Heart left ventricle (tissue), 16 donors: ENCODE measurements at regions of chr5 and their contacts with region 1.

Region 1: DNA sequence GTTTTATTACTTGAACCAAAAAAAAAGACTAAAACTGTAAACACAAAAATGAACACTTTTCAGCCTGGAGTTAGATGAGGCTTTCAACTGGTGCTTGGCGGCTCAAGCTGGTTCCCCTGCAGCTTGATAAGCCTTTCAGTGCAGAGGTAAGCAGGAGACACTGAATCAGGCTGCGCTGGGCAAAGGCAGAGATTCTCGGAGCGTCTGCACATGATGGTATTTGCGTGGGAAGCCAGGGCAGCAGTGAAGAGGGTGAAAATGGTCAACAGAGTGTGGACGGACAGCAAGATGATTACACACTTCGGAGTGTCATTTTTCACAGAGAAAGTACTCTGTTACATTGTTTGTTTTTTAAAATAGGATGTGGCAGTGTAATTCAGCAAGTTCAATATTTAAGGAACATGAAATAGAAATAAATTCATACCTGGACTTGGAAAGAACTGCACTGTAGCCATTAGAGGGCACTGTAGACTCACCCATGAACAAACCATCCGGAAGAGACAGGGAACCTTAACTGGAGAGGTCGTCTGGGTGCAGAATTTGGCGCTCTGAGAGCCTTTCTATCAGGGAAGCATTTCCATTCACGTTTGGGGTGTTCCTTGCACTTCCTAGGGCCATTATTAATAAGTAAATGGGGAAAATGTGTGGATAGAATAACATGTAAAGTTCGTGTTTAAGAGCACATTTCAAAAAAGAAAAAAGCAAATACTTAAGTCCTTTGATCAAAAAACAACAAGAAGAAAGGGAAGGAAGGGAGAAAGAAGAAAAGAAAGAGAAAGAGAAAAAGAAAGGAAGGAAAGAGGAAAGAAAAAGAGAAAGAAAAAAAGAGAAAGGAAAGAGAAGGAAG is 69.8 kb downstream of the ICE1 start:
- DNase-seq: no peak
- ATAC-seq: peak in 3 of 4 donors; percentile 49 to 62 (median 57)
- H3K4me3 ChIP-seq: no peak overlapping the region
- H3K27ac ChIP-seq: no peak overlapping the region
- H3K4me1 ChIP-seq: peaks cover 0 to 31% (median 8%) of the 10 kb centered on the region in 12 donors
- H3K27me3 ChIP-seq: peaks cover 0 to 7% (median 0%) of the 10 kb centered on the region in 9 donors
- CTCF ChIP-seq: peak; percentile 55 to 78 (median 62)
- POLR2A ChIP-seq: no peak

Region 2: GRCh38 chr5:5795074-5795771 is 302.9 kb after region 1 on chr5:
- intact Hi-C with region 1: loop called in 3 of 10 experiments (anchors 5 to 10 kb)
- DNase-seq: peak; percentile 55 to 92 (median 67)
- ATAC-seq: peak; percentile 89 to 98 (median 96)
- H3K4me3 ChIP-seq: no peak overlapping the region
- H3K27ac ChIP-seq: peak overlapping the region in 9 of 12 donors; percentile 15 to 74 (median 55)
- H3K4me1 ChIP-seq: peaks cover 0 to 27% (median 5%) of the 10 kb centered on the region in 12 donors
- H3K27me3 ChIP-seq: no peaks in the 10 kb centered on the region
- CTCF ChIP-seq: no peak
- POLR2A ChIP-seq: no peak

Region 3: GRCh38 chr5:5886812-5887486 is 394.6 kb after region 1 on chr5:
- intact Hi-C with region 1: loop called in 7 of 10 experiments (anchors 5 kb)
- DNase-seq: peak in 2 of 5 donors; percentile 25 to 65
- ATAC-seq: peak in 3 of 4 donors; percentile 46 to 65 (median 55)
- H3K4me3 ChIP-seq: no peak overlapping the region
- H3K27ac ChIP-seq: no peak overlapping the region
- H3K4me1 ChIP-seq: peaks cover 0 to 5% (median 0%) of the 10 kb centered on the region in 12 donors
- H3K27me3 ChIP-seq: peaks cover 0 to 5% (median 0%) of the 10 kb centered on the region in 9 donors
- CTCF ChIP-seq: peak; percentile 30 to 63 (median 48)
- POLR2A ChIP-seq: no peak

Region 4: DNA sequence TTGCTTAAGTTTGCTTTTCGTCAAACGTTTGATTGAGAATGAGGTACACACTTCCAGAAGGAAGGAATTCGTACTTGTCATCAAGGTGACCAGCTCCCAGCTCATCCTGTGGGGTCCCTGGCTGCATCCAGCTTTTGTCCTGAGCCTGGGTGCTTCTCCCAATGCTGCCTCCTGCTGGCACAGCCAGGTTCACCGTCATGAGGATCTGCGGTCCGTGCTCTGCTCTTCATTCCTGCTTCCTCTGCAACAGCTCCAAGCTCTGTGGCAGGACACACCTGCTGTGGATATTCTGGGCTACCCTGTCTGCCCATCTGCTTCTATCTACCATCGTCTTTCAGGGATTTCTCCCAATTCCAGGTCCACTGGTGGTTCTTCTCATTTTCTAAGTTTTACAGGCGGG is 943.0 kb after region 1 on chr5:
- intact Hi-C with region 1: loop called in 2 of 10 experiments (anchors 10 kb)
- DNase-seq: no peak
- ATAC-seq: no peak
- H3K4me3 ChIP-seq: no peak overlapping the region
- H3K27ac ChIP-seq: no peak overlapping the region
- H3K4me1 ChIP-seq: peaks cover 0 to 23% (median 7%) of the 10 kb centered on the region in 12 donors
- H3K27me3 ChIP-seq: no peaks in the 10 kb centered on the region
- CTCF ChIP-seq: peak in 11 of 12 donors; percentile 5 to 44 (median 23)
- POLR2A ChIP-seq: no peak

Region 5: GRCh38 chr5:6525910-6526309 is 1033.6 kb after region 1 on chr5:
- intact Hi-C with region 1: loop called in 3 of 10 experiments (anchors 5 to 10 kb)
- DNase-seq: no peak
- ATAC-seq: peak; percentile 63 to 87 (median 73)
- H3K4me3 ChIP-seq: no peak overlapping the region
- H3K27ac ChIP-seq: no peak overlapping the region
- H3K4me1 ChIP-seq: no peaks in the 10 kb centered on the region
- H3K27me3 ChIP-seq: no peaks in the 10 kb centered on the region
- CTCF ChIP-seq: peak in 11 of 12 donors; percentile 22 to 51 (median 41)
- POLR2A ChIP-seq: no peak

Region 6: GRCh38 chr5:6583049-6583880 is 1091.0 kb after region 1 on chr5:
- intact Hi-C with region 1: loop called in 7 of 10 experiments (anchors 5 to 10 kb)
- DNase-seq: peak in 4 of 5 donors; percentile 39 to 67 (median 53)
- ATAC-seq: peak; percentile 48 to 96 (median 84)
- H3K4me3 ChIP-seq: peak overlapping the region in 11 of 12 donors; percentile 30 to 61 (median 48)
- H3K27ac ChIP-seq: peak overlapping the region in 1 of 12 donors; percentile 2
- H3K4me1 ChIP-seq: peaks cover 0 to 15% (median 2%) of the 10 kb centered on the region in 12 donors
- H3K27me3 ChIP-seq: peaks cover 0 to 30% (median 0%) of the 10 kb centered on the region in 9 donors
- CTCF ChIP-seq: peak in 11 of 12 donors; percentile 17 to 65 (median 42)
- POLR2A ChIP-seq: no peak

Region 7: DNA sequence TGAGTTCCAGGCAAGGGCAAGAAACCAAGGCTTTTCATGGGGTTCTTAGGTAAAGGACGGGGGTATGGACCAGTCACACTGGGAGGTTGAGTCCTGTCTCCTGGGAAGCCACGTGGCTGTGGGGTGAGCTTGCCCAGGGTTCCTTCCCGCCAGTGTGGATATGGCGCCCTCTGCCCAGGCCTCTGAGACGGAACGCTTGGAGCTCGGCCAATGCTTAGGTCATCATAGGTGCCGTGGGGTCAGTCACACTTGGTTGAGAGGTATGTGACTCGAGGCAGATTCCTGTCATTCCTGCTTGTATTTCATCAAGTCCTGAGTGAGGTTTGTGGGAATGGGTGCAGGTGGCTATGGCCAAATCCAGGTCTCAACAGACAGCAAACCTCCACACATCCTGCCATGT is 1267.1 kb after region 1 on chr5:
- intact Hi-C with region 1: loop called in 1 of 10 experiments (anchors 10 kb)
- DNase-seq: peak in 1 of 5 donors; percentile 24
- ATAC-seq: no peak
- H3K4me3 ChIP-seq: no peak overlapping the region
- H3K27ac ChIP-seq: no peak overlapping the region
- H3K4me1 ChIP-seq: peaks cover 0 to 8% (median 0%) of the 10 kb centered on the region in 12 donors
- H3K27me3 ChIP-seq: no peaks in the 10 kb centered on the region
- CTCF ChIP-seq: no peak
- POLR2A ChIP-seq: no peak